PC-3 (cell line): ENCODE measurements at regions of chr5 and their contacts with region 1.

Region 1: DNA sequence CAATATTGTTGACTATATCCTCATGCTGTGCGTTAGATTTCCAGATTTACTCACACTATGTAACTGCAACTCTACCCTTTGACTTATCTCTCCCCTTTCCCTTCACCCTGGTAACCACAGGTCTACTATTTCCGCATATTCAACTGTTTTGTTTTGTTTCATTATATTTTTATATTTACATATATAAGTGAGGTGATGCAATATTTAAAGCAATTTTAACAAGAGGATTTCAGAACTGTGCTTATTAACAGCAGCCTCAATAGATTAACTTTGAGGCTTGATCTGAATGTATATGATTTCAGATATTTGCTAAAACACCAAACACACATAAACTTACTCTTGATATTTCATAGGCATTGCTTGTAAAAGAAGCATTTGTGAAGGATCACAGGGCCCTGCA is 58.9 kb upstream of the MRPS30 start:
- DNase-seq: no peak
- ATAC-seq: no peak
- H3K4me3 ChIP-seq: no peak overlapping the region
- H3K27ac ChIP-seq: no peak overlapping the region
- H3K4me1 ChIP-seq: no peaks in the 10 kb centered on the region
- H3K27me3 ChIP-seq: peaks cover 12% of the 10 kb centered on the region; the same call in 1 of the 2 replicates
- CTCF ChIP-seq: no peak

Region 2: DNA sequence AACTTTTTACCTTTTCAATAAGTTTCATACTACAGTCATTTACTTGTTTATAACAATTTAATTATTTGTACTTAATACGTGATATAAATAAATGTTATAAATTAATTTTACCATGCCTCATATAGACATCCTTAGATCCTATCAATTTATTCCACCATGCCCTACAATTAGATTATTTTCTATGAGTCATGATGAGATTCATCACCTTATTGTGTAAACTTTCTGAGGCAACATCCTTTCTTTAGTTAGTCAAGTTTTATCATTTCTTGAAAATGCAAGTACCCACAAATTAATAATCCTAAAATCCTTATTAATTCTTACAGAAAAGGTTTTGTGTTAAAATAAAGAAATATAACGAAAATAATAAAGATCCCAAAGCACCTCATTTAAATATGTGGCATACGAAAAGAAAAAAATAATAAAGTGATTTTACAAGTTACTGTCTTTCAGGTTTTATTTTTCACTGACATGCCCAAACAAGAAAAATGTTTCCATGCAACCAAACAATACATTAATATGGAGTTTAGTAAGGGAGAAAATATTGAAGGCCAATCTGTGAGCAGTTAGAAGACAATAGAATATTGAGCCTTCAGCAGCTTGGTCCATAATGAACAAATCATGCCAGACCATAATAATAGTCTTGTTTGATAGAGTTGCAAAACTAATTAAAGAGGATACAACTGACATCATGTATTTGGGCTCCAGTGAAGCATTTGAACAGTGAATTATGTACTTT is 129.8 kb before region 1 on chr5:
- CTCF ChIA-PET with region 1: no interaction called
- POLR2A ChIA-PET with region 1: no interaction called
- intact Hi-C with region 1: loop called (anchors 10 kb)
- DNase-seq: no peak
- ATAC-seq: no peak
- H3K4me3 ChIP-seq: no peak overlapping the region
- H3K27ac ChIP-seq: no peak overlapping the region
- H3K4me1 ChIP-seq: no peaks in the 10 kb centered on the region
- H3K27me3 ChIP-seq: peaks cover 5% of the 10 kb centered on the region; the same call in 1 of the 2 replicates
- CTCF ChIP-seq: no peak

Region 3: DNA sequence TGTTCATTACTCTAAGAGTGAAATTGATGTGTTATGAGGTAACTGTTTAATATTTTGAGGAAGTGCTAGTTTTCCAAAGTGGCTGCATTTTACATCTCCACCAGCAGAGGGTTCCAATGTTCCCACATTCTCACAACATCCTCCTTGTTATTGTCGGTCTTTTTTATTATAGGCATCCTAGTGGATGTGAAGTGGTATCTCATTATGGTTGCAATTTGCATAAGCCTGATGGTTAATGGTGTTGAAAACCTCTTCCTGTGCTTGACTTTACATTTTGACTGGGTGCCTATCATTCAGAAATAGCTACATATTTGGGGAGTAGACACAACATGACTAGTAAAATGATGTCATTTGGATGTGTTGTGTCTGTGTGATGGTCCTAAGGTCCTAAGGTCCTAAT is 202.5 kb after region 1 on chr5:
- CTCF ChIA-PET with region 1: no interaction called
- POLR2A ChIA-PET with region 1: no interaction called
- intact Hi-C with region 1: no loop called
- DNase-seq: peak; percentile 74
- ATAC-seq: peak; percentile 63
- H3K4me3 ChIP-seq: no peak overlapping the region
- H3K27ac ChIP-seq: no peak overlapping the region
- H3K4me1 ChIP-seq: no peaks in the 10 kb centered on the region
- H3K27me3 ChIP-seq: no peaks in the 10 kb centered on the region
- CTCF ChIP-seq: peak; percentile 93

Region 4: DNA sequence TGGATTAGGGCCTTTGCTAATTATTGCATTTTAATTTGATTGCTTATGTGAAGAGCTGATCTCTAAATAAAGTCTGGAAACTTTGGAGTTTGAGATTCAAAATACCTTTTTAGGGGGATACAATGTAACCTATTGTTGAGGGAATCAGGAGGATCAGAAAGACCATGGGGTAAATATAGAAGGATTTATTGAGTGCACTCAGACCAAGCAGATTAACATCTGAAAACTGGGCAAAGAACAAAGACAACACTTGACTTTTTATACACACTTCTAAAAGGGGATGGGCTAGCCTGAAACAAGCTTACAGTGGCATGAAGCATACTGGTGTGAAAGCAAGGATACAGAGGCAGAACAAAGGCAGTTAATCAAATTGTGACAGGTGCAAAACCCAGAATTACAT is 233.2 kb after region 1 on chr5:
- CTCF ChIA-PET with region 1: no interaction called
- POLR2A ChIA-PET with region 1: no interaction called
- intact Hi-C with region 1: no loop called
- DNase-seq: no peak
- ATAC-seq: no peak
- H3K4me3 ChIP-seq: no peak overlapping the region
- H3K27ac ChIP-seq: no peak overlapping the region
- H3K4me1 ChIP-seq: no peaks in the 10 kb centered on the region
- H3K27me3 ChIP-seq: no peaks in the 10 kb centered on the region
- CTCF ChIP-seq: no peak